AG04449 (cell line): ENCODE measurements at regions of chr6 and their contacts with region 1.

Region 1: DNA sequence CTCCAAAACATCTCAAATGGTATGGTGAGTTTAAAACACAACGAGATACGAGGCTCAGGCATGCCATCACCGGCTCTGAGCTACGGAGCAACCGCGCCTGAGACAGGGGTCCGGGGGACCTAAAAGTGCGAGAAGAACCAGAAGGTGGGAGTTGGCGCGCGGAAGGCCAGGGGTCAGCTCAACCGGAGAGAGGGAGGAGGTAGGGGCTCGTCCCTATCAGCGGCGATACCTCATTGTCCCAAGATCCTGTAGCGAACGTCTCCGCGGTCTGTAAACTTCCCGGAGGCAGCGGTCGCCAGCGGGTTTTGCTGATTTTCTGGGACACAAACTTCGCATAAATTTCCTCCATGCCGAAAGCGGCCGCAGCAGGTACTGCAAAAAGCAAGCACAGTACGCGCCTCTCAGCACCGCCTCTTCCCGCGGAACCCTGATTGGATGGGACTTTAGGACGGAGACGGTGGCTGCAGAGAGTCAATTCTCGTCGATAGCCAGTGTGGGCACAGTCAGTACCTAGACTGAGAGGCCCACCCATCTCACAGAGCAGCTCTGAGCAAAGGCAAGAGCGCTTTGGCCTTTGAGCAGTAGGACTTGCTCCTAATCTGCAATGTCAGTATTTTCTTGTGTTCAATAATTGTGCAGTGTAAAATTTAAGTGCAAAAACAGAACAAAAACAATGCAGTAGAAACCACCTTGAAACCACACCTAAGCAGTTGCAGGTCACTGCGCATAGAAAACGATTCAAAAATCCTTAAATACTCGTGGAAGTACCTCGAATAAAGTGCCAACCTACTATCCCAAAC is at the start of gene NUP43:
- DNase-seq: peak; percentile 63
- H3K4me3 ChIP-seq: peak within 1 kb of the TSS; percentile 95
- CTCF ChIP-seq: peak; percentile 51

Region 2: DNA sequence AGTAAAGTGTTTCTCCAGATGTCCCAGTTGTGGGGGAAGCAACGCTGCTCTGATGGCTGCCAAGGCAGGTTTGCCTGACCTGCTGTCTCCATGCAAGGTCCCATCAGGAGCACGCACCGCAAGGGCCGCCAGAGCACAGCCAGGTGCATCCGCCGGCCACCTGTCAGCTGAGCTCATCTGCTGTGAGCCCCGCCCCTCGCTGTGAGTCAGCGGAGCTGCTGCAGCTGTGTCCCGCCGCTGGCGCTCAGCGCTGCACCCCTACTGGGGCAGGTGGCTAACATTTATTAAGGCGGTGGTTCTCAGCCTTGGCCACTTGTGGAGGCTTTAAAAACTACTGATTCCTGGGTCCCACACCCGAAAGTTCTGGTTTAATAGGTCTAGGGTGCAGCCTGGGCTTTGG is 773.9 kb before region 1 on chr6:
- CTCF ChIA-PET with region 1: no interaction called
- POLR2A ChIA-PET with region 1: no interaction called
- DNase-seq: no peak
- H3K4me3 ChIP-seq: no peak overlapping the region
- CTCF ChIP-seq: no peak

Region 3: DNA sequence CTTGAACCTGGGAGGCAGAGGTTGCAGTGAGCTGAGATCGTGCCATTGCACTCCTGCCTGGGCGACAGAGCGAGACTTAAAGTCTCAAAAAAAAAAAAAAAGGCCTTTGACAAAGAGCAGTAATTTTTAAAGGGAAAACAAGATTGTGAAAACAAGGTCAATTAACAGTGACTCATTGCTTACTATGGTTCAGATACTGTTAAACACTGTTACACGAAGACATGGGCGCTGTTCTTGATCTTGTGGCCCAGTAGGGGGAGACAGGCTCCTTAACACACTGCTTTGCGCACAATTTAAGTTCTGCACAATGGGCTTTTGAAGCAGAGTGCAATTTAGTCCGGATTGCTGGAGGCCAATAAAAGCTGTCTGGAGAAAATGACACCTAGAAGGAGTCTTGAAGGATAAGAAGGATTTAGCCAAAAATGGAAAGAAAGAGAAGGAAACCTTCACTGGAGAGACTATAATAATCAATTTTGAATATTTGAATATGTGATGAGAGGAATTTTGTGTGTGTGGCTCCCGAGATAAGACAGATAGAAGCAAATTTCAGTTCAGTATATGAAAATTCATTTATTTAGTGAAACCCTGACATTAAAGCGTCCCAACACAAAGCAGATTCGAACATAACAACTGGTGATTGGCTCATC is 22.5 kb before region 1 on chr6:
- CTCF ChIA-PET with region 1: interaction called, 25 read pairs
- POLR2A ChIA-PET with region 1: no interaction called
- DNase-seq: no peak
- H3K4me3 ChIP-seq: no peak overlapping the region
- CTCF ChIP-seq: peak; percentile 76

Region 4: DNA sequence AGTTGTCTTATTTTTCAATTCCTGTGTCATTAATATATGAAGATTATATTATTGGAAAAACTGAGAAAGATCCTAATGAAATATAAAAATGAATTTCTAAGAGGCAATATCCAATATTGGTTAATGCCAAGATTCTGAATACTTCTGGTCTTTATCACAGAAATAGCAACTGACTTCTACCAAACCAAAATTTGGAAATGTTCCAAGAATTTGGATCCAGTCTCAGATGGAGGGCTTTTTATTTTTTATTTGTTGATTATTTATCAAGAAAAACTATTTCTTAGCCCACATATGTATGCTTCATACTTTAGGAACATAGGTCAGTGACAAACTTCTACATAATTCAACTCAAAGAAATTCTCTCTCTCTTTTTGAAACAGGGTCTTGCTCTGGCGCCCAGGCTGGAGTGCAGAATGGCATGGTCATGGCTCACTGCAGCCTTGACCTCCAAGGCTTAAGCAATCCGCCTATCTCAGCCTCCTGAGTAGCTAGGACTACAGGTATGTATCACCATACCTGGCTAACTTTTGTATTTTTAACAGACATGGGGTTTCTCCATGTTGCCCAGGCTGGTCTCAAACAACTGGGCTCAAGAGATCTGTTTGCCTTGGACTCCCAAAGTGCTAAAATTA is 13.1 kb before region 1 on chr6:
- CTCF ChIA-PET with region 1: interaction called, 37 read pairs
- POLR2A ChIA-PET with region 1: interaction called, 5 read pairs
- DNase-seq: no peak
- H3K4me3 ChIP-seq: no peak overlapping the region
- CTCF ChIP-seq: no peak